CD8-positive, alpha-beta T cell (primary cell): ENCODE measurements at regions of chr5 and their contacts with region 1.

Region 1: DNA sequence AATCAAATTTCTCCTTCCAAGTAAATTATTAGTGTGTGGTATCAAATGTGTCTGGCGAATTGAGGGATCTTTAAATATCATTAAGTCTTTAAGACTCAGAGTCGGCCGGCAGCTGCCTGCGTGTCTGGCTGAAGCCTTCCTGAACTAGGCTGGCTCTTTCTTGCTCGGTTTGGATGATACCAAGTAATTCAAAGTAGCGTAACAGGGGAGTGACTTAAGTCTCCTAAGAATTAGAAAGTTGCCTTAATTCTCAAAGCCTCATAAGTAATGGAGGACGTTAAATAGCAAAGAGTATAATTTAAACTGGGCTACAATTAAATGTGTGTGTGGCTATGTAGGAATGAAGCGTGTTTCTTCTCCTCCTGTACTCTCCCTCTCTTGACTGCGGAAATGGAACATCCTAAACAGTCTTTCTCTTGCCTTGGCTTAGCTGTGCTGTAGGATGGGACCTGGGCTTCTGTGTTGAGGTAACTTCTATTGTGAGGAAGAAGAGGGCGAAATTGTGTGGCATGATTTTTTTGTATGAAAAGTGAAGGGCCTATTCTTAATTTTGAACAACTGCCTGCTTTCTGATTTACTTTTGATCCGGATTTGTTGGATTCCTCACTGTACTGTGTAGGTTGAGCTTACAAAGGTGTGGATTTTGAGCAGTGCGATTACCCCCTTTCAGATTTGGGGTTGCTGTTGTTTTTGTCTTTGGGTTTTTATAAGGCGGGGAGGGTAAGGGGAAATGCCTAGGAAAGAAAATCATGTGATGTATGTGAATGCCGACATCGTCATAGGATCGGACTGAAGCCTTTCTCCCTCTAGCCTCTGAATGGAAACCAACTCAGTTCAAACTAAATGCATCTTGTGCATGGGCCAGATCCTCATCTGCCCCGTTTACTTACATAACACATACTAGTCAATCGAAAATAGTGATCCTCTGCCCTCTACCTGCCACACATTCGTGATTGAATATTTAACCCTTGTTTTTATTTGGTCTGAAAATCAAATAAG is 29.9 kb downstream of the CPEB4 start:
- DNase-seq: peak; percentile 18 to 89 (median 59)
- ATAC-seq: peak; percentile 92
- H3K4me3 ChIP-seq: peak overlapping the region; percentile 58 to 63
- H3K4me3 Mint-ChIP-seq: no peak overlapping the region
- H3K27ac ChIP-seq: peak overlapping the region; percentile 68 to 84
- H3K27ac Mint-ChIP-seq: no peak overlapping the region
- H3K4me1 ChIP-seq: peaks cover 13% of the 10 kb centered on the region
- H3K4me1 Mint-ChIP-seq: peaks cover 23% of the 10 kb centered on the region
- H3K27me3 ChIP-seq: no peaks in the 10 kb centered on the region
- H3K27me3 Mint-ChIP-seq: no peaks in the 10 kb centered on the region
- CTCF ChIP-seq: no peak

Region 2: DNA sequence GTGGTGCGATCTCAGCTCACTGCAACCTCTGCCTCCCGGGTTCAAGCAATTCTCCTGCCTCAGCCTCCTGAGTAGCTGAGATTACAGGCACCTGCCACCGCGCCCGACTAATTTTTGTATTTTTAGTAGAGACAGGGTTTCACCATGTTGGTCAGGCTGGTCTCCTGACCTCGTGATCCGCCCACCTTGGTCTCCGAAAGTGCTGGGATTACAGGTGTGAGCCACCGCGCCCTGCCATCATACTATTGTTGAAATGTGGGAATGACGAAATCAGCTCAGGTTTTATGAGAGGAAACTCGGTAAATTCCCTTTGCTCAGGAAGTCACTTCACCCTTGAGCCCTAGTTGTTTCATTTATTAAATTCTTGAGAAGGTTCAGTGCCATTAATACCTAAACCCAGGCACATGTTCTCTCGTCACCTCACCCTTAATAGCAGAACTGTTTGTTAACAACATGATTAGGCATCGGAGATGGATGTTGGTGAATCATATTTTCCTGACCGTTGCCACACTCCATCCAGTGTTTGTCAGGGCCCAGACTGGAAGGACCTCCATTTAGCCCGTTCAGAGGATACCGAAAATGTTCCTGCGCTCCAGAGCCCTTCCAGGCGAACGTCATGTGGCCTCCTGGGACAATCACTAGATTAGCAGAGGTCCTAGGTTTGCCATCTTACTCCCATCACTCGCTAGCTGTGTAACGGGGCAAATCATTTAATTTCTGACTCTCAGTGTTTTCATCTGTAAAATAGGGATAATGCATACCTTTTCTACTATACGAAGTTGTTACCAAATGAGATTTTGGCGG is 882.0 kb before region 1 on chr5:
- CTCF ChIA-PET with region 1: no interaction called
- POLR2A ChIA-PET with region 1: no interaction called
- intact Hi-C with region 1: no loop called
- DNase-seq: peak in 1 of 9 experiments; percentile 23
- ATAC-seq: no peak
- H3K4me3 ChIP-seq: peak overlapping the region in 1 of 2 experiments; percentile 19
- H3K4me3 Mint-ChIP-seq: peak overlapping the region; percentile 78
- H3K27ac ChIP-seq: peak overlapping the region; percentile 32 to 83
- H3K27ac Mint-ChIP-seq: peak overlapping the region; percentile 95
- H3K4me1 ChIP-seq: peaks cover 40% of the 10 kb centered on the region
- H3K4me1 Mint-ChIP-seq: peaks cover 67% of the 10 kb centered on the region
- H3K27me3 ChIP-seq: no peaks in the 10 kb centered on the region
- H3K27me3 Mint-ChIP-seq: no peaks in the 10 kb centered on the region
- CTCF ChIP-seq: no peak

Region 3: GRCh38 chr5:173615884-173616576 is 302.1 kb before region 1 on chr5:
- CTCF ChIA-PET with region 1: interaction called, 5 read pairs
- POLR2A ChIA-PET with region 1: interaction called, 16 read pairs
- intact Hi-C with region 1: loop called (anchors 1 kb)
- DNase-seq: peak; percentile 41 to 88 (median 70)
- ATAC-seq: peak; percentile 60
- H3K4me3 ChIP-seq: peak overlapping the region; percentile 81 to 89
- H3K4me3 Mint-ChIP-seq: peak overlapping the region; percentile 95
- H3K27ac ChIP-seq: peak overlapping the region; percentile 85 to 91
- H3K27ac Mint-ChIP-seq: peak overlapping the region; percentile 97
- H3K4me1 ChIP-seq: peaks cover 34% of the 10 kb centered on the region
- H3K4me1 Mint-ChIP-seq: peaks cover 52% of the 10 kb centered on the region
- H3K27me3 ChIP-seq: no peaks in the 10 kb centered on the region
- H3K27me3 Mint-ChIP-seq: no peaks in the 10 kb centered on the region
- CTCF ChIP-seq: peak; percentile 73

Region 4: GRCh38 chr5:173781814-173782670 is 136.0 kb before region 1 on chr5:
- CTCF ChIA-PET with region 1: no interaction called
- POLR2A ChIA-PET with region 1: no interaction called
- intact Hi-C with region 1: loop called (anchors 10 kb)
- DNase-seq: peak; percentile 16 to 76 (median 69)
- ATAC-seq: peak; percentile 93
- H3K4me3 ChIP-seq: no peak overlapping the region
- H3K4me3 Mint-ChIP-seq: no peak overlapping the region
- H3K27ac ChIP-seq: no peak overlapping the region
- H3K27ac Mint-ChIP-seq: peak overlapping the region; percentile 86
- H3K4me1 ChIP-seq: peaks cover 6% of the 10 kb centered on the region
- H3K4me1 Mint-ChIP-seq: peaks cover 15% of the 10 kb centered on the region
- H3K27me3 ChIP-seq: no peaks in the 10 kb centered on the region
- H3K27me3 Mint-ChIP-seq: no peaks in the 10 kb centered on the region
- CTCF ChIP-seq: no peak

Region 5: DNA sequence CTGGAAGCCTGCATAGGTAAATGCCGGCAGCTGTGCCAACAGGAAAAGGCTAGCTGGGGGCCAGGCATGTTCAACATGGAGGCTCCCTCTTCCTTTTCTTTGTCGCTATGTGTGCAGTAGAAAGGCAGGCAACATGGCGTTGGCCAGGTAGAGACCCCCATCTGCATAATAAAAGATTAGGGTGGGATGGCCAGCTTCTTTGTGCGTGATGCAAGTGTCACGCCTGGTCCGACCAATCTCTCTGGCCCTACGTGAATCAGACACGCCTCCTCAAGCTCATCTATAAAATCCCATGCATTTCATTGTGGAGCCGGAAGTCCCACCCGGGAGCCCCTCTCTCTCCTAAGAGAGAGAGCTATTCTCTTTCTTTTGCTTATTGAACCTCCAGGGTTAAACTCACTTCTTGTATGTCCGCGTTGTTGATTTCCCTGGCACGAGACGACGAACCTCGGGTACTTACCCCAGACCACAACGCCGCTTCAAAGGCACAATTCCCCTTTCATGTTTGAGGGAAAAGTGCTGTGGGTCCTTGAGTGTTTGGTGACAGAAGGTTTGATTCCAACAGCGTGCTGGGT is 45.9 kb after region 1 on chr5:
- CTCF ChIA-PET with region 1: no interaction called
- POLR2A ChIA-PET with region 1: interaction called, 12 read pairs
- intact Hi-C with region 1: no loop called
- DNase-seq: peak in 4 of 9 experiments; percentile 35 to 74 (median 62)
- ATAC-seq: peak; percentile 81
- H3K4me3 ChIP-seq: no peak overlapping the region
- H3K4me3 Mint-ChIP-seq: peak overlapping the region; percentile 58
- H3K27ac ChIP-seq: peak overlapping the region in 1 of 2 experiments; percentile 26
- H3K27ac Mint-ChIP-seq: peak overlapping the region; percentile 57
- H3K4me1 ChIP-seq: peaks cover 16% of the 10 kb centered on the region
- H3K4me1 Mint-ChIP-seq: peaks cover 30% of the 10 kb centered on the region
- H3K27me3 ChIP-seq: no peaks in the 10 kb centered on the region
- H3K27me3 Mint-ChIP-seq: no peaks in the 10 kb centered on the region
- CTCF ChIP-seq: no peak